Natural killer cell (primary cell): ENCODE measurements at regions of chr7 and their contacts with region 1.

Region 1: DNA sequence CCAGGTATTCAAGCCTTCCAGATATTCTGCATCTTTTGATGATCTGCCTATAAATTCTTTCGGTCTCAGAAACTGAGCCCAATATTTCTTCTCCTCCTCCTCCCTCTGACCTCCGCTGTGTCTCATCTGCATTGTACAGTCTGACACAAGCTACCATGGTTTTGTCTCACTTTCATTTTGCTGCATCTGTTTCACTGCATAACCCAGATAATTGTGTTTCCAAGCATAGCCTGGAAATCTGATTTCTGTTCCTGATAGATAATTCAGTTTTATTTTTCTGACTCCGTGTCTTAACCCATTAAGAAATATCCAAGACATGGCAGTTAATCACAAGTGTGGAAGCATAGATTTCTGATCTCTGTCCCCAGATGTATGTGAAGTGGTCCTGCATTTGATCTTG is 374.2 kb upstream of the SEMA3A start:
- DNase-seq: no peak
- ATAC-seq: no peak
- H3K4me3 ChIP-seq: no peak overlapping the region
- H3K4me3 Mint-ChIP-seq: no peak overlapping the region
- H3K27ac ChIP-seq: no peak overlapping the region
- H3K27ac Mint-ChIP-seq: no peak overlapping the region
- H3K4me1 ChIP-seq: no peaks in the 10 kb centered on the region
- H3K4me1 Mint-ChIP-seq: no peaks in the 10 kb centered on the region
- H3K27me3 ChIP-seq: no peaks in the 10 kb centered on the region
- H3K27me3 Mint-ChIP-seq: no peaks in the 10 kb centered on the region
- CTCF ChIP-seq: no peak

Region 2: DNA sequence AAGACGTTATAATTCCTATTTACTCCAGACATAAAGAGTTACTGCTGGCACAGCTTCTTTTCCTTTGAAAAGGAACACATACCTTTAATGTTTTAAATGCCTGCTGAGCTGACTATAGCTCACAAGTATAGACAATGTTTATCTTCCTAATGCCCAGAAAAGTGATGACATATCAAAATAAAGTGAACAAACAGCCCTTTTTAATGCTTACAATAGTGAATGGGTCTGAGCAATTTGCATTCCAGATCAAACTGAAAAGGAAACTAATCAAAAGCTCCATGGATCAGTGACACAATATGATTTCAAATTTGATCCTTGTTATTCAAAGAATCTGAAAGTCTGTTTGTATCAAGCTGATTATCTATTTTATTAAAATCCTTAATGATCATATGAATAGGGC is 686.2 kb before region 1 on chr7:
- intact Hi-C with region 1: no loop called
- DNase-seq: no peak
- ATAC-seq: no peak
- H3K4me3 ChIP-seq: no peak overlapping the region
- H3K4me3 Mint-ChIP-seq: no peak overlapping the region
- H3K27ac ChIP-seq: no peak overlapping the region
- H3K27ac Mint-ChIP-seq: no peak overlapping the region
- H3K4me1 ChIP-seq: no peaks in the 10 kb centered on the region
- H3K4me1 Mint-ChIP-seq: no peaks in the 10 kb centered on the region
- H3K27me3 ChIP-seq: no peaks in the 10 kb centered on the region
- H3K27me3 Mint-ChIP-seq: no peaks in the 10 kb centered on the region
- CTCF ChIP-seq: no peak

Region 3: GRCh38 chr7:84506151-84506550 is 62.6 kb before region 1 on chr7:
- intact Hi-C with region 1: loop called (anchors 10 kb)
- DNase-seq: no peak
- ATAC-seq: no peak
- H3K4me3 ChIP-seq: no peak overlapping the region
- H3K4me3 Mint-ChIP-seq: no peak overlapping the region
- H3K27ac ChIP-seq: no peak overlapping the region
- H3K27ac Mint-ChIP-seq: no peak overlapping the region
- H3K4me1 ChIP-seq: no peaks in the 10 kb centered on the region
- H3K4me1 Mint-ChIP-seq: no peaks in the 10 kb centered on the region
- H3K27me3 ChIP-seq: no peaks in the 10 kb centered on the region
- H3K27me3 Mint-ChIP-seq: no peaks in the 10 kb centered on the region
- CTCF ChIP-seq: no peak